K562 (cell line): ENCODE measurements at regions of chr17 and their contacts with region 1.

Region 1: DNA sequence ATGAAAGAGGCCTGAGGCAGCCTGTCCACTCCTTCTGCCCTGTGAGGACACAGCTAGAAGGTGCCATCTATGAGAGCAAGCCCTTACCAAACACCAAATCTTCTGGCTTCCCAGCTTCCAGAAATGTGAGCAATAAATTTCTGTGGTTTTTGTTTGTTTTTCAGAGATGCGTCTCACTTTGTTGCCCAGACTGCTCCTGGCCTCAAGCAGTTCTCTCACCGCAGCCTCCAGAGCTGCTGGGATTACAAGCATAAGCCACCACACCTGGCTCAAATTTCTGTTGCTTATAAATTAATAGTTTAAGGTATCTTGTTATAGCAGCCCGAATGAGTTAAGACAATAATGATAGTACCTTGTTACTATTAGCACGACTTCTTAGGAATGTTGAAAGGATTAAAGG is 12.5 kb upstream of the SLC16A11 start:
- DNase-seq: no peak
- ATAC-seq: no peak
- H3K4me3 ChIP-seq: no peak overlapping the region
- H3K27ac ChIP-seq: no peak overlapping the region
- H3K4me1 ChIP-seq: no peaks in the 10 kb centered on the region; a peak in 1 of 5 replicates
- H3K27me3 ChIP-seq: peaks cover 13 to 15% of the 10 kb centered on the region in 2 experiments
- CTCF ChIP-seq: no peak
- EP300 ChIP-seq: no peak
- POLR2A ChIP-seq: no peak
- RAD21 ChIP-seq: no peak

Region 2: DNA sequence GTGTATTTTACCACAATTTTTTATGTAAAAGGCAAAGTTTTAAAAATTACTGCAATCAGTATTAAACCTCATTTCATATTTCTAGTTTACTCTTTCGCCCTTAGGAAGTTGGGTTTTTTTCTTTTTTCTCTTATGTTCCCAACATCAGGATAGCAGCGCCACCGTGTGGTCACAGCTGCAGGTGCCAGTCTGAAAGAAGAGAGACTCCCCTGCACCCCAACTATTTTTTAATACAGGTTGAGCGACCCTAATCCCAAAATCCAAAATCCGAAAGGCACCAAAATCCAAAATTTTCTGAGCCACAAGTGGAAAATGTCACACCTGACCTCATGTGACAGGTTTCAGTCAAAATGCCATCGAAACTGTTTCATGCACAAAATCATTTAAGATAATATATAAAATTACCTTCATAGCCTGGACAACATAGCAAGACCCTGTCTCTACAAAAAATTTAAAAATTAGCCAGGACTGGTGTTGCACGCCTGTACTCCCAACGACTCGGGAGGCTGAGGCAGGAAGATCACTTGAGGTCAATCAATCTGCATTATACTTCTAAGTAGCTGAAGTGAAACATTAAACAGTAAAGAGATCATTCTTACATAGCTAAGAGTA is 80.0 kb after region 1 on chr17:
- CTCF ChIA-PET with region 1: interaction called, 6 read pairs
- POLR2A ChIA-PET with region 1: no interaction called
- in situ Hi-C with region 1: loop called (anchors 5 kb)
- intact Hi-C with region 1: loop called (anchors 1 kb)
- DNase-seq: peak; percentile 53 to 72 (median 68)
- ATAC-seq: no peak
- H3K4me3 ChIP-seq: no peak overlapping the region
- H3K27ac ChIP-seq: no peak overlapping the region
- H3K4me1 ChIP-seq: peaks cover 0 to 8% of the 10 kb centered on the region in 2 experiments; a peak in 2 of 5 replicates
- H3K27me3 ChIP-seq: peaks cover 16 to 41% of the 10 kb centered on the region in 2 experiments
- CTCF ChIP-seq: peak; percentile 72 to 80 (median 75)
- EP300 ChIP-seq: no peak
- POLR2A ChIP-seq: no peak
- RAD21 ChIP-seq: peak; percentile 77

Region 3: DNA sequence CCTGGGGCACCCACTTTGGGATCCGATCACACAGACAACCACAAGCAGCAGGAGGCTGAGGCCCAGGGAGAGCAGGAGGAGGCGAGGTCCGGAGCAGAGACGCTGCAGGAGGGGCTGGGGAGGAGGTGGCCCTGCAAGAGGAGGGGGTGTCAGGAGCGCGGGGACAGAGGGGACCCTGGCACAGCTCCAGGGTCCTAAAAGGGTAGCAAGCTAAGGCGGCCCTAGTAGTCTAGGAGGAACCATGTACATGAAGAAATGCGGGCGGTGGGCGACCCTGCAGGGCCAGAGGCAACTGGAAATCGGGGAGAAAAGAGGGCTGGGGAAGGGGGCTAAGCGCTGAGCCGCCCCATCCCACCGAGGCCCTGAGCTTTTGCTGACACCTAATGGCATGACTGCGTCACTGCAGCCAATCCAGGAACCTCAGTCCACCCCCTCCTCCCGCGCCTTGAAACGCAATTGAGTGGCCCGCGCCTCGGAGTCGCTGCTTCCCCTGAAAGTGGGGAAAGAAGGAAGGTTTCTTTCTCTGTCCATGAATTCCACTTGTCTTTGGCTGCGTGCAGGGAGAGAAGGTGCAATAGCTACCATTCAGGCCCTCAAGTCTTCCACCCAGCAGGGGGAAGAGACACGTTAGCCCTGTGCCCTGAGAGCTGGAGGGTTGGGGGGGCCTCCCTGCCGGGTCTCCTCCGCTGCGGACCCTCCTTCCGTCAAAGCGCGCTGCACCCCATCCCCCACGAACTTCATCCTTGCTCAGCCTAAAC is 121.0 kb after region 1 on chr17:
- CTCF ChIA-PET with region 1: no interaction called
- POLR2A ChIA-PET with region 1: no interaction called
- in situ Hi-C with region 1: no loop called
- intact Hi-C with region 1: loop called (anchors 1 kb)
- DNase-seq: peak; percentile 75 to 84 (median 76)
- ATAC-seq: peak; percentile 95
- H3K4me3 ChIP-seq: peak overlapping the region; percentile 36
- H3K27ac ChIP-seq: no peak overlapping the region; the same call in 2 of the 3 replicates
- H3K4me1 ChIP-seq: peaks cover 3 to 26% of the 10 kb centered on the region in 2 experiments; a peak in 3 of 5 replicates
- H3K27me3 ChIP-seq: peaks cover 0 to 14% of the 10 kb centered on the region in 2 experiments; a peak in 2 of 5 replicates
- CTCF ChIP-seq: peak; percentile 75 to 84 (median 78)
- EP300 ChIP-seq: no peak
- POLR2A ChIP-seq: no peak
- RAD21 ChIP-seq: peak; percentile 66 to 71